CD4-positive, alpha-beta memory T cell (primary cell): ENCODE measurements at regions of chr1 and their contacts with region 1.

Region 1: GRCh38 chr1:206725109-206725963 is 40.6 kb downstream of the MAPKAPK2 start:
- DNase-seq: peak in 4 of 5 donors; percentile 47 to 60 (median 56)
- H3K4me3 ChIP-seq: no peak overlapping the region
- H3K4me3 Mint-ChIP-seq: peak overlapping the region in 2 of 8 donors; percentile 43 to 57
- H3K27ac ChIP-seq: no peak overlapping the region
- H3K27ac Mint-ChIP-seq: peak overlapping the region in 6 of 7 donors; percentile 60 to 90 (median 76)
- H3K4me1 ChIP-seq: peaks cover 32% of the 10 kb centered on the region
- H3K4me1 Mint-ChIP-seq: peaks cover 33 to 61% (median 46%) of the 10 kb centered on the region in 4 donors
- H3K27me3 ChIP-seq: no peaks in the 10 kb centered on the region
- H3K27me3 Mint-ChIP-seq: no peaks in the 10 kb centered on the region

Region 2: GRCh38 chr1:206469933-206470691 is 255.2 kb before region 1 on chr1 and contains the start of gene IKBKE:
- CTCF ChIA-PET with region 1: no interaction called
- POLR2A ChIA-PET with region 1: no interaction called
- intact Hi-C with region 1: no loop called
- DNase-seq: peak; percentile 44 to 69 (median 47)
- H3K4me3 ChIP-seq: peak within 1 kb of the TSS; percentile 99
- H3K4me3 Mint-ChIP-seq: peak within 1 kb of the TSS; percentile 84 to 97 (median 93)
- H3K27ac ChIP-seq: peak within 1 kb of the TSS; percentile 80
- H3K27ac Mint-ChIP-seq: peak within 1 kb of the TSS; percentile 64 to 95 (median 92)
- H3K4me1 ChIP-seq: peaks cover 86% of the 10 kb centered on the region
- H3K4me1 Mint-ChIP-seq: peaks cover 54 to 91% (median 79%) of the 10 kb centered on the region in 4 donors
- H3K27me3 ChIP-seq: no peaks in the 10 kb centered on the region
- H3K27me3 Mint-ChIP-seq: no peaks in the 10 kb centered on the region
- total RNA-seq, gene IKBKE: 81.8 to 92.3 TPM

Region 3: DNA sequence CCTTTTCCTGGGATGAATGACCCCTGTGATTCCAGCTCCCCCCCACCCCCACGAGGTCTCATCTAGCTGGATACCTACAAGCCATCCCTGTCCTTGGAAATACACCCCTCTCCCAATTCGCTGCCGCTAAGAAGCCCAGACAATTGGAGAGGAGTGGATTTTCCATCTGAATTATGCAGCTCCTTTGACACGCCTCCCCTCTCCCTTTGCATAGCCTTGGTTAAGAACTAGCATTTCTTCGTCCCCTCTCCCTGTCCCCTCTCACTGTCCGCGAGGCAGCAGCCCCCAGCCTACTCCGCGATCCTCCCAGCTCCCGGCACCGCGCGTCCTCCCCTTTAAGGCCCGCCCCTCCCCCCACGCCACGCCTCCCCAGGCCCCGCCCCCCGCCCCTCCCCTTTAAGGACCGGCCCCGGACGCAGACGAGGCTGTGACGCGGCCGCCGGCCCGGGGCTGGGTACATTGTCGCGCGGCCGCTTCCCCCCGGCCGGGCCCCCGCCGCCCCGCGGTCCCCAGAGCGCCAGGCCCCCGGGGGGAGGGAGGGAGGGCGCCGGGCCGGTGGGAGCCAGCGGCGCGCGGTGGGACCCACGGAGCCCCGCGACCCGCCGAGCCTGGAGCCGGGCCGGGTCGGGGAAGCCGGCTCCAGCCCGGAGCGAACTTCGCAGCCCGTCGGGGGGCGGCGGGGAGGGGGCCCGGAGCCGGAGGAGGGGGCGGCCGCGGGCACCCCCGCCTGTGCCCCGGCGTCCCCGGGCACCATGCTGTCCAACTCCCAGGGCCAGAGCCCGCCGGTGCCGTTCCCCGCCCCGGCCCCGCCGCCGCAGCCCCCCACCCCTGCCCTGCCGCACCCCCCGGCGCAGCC is 40.6 kb before region 1 on chr1 and contains the start of gene MAPKAPK2:
- CTCF ChIA-PET with region 1: interaction called, 29 read pairs
- POLR2A ChIA-PET with region 1: no interaction called
- intact Hi-C with region 1: loop called (anchors 1 kb)
- DNase-seq: peak; percentile 71 to 77 (median 73)
- H3K4me3 ChIP-seq: peak within 1 kb of the TSS; percentile 55 to 93
- H3K4me3 Mint-ChIP-seq: peak within 1 kb of the TSS; percentile 93 to 100 (median 96)
- H3K27ac ChIP-seq: peak within 1 kb of the TSS; percentile 90
- H3K27ac Mint-ChIP-seq: peak within 1 kb of the TSS; percentile 94 to 98 (median 97)
- H3K4me1 ChIP-seq: peaks cover 45% of the 10 kb centered on the region
- H3K4me1 Mint-ChIP-seq: peaks cover 26 to 52% (median 37%) of the 10 kb centered on the region in 4 donors
- H3K27me3 ChIP-seq: no peaks in the 10 kb centered on the region
- H3K27me3 Mint-ChIP-seq: peaks cover 2 to 3% of the 10 kb centered on the region in 2 donors
- total RNA-seq, gene MAPKAPK2: 71.7 to 72.8 TPM

Region 4: DNA sequence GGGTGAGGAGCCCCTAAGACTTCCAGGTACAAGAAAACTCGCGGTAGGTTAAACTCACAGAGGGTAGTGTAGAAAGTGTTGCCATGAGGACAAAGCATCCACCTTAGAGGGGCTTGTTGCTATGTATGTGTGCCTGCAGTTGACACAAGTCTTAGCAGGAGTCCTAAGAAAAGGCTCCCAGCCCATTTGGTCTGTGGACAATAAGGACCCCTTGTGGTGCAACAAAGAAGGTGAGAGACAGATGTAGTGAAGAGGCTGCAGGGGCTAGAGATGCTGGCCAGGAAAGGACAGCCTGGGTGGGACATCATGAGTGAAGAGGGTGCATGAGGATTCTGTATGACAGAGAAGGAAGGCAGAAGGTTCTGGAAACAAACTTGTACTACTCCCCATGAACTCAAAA is 83.3 kb after region 1 on chr1:
- CTCF ChIA-PET with region 1: interaction called, 351 read pairs
- POLR2A ChIA-PET with region 1: interaction called, 3 read pairs
- intact Hi-C with region 1: loop called (anchors 1 kb)
- DNase-seq: peak; percentile 61 to 68 (median 63)
- H3K4me3 ChIP-seq: no peak overlapping the region
- H3K4me3 Mint-ChIP-seq: no peak overlapping the region
- H3K27ac ChIP-seq: no peak overlapping the region
- H3K27ac Mint-ChIP-seq: peak overlapping the region in 6 of 7 donors; percentile 20 to 90 (median 83)
- H3K4me1 ChIP-seq: peaks cover 35% of the 10 kb centered on the region
- H3K4me1 Mint-ChIP-seq: peaks cover 24 to 56% (median 43%) of the 10 kb centered on the region in 4 donors
- H3K27me3 ChIP-seq: no peaks in the 10 kb centered on the region
- H3K27me3 Mint-ChIP-seq: no peaks in the 10 kb centered on the region

Region 5: DNA sequence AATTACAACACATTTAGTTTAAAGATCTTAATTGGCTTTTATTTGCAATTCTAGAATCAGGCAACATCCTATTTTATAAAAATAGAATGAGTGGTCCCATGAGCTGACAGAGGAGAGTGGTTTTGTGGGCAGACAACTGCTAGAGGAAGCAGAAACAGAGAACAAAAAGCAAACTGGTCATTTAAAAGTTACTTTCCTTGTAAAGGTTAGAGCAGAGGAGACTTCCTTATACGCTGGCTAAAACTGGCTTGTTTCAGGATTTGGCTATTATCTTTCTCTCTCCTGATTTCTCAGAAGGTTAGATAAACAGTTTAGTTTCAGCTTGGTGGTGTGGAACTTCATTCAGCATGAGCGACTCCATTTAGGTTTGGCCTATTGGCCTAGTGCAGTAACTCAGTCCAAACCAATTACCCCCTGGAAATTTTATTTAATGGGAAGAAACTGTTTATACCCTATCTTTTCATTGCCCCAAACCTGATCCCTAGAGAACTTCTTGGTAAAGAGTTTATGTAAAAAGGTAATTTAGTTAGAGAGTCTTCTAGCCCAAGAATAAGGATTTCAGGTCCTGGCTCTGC is 107.9 kb after region 1 on chr1:
- CTCF ChIA-PET with region 1: interaction called, 10 read pairs
- POLR2A ChIA-PET with region 1: no interaction called
- intact Hi-C with region 1: no loop called
- DNase-seq: no peak
- H3K4me3 ChIP-seq: no peak overlapping the region
- H3K4me3 Mint-ChIP-seq: no peak overlapping the region
- H3K27ac ChIP-seq: no peak overlapping the region
- H3K27ac Mint-ChIP-seq: no peak overlapping the region
- H3K4me1 ChIP-seq: peaks cover 21% of the 10 kb centered on the region
- H3K4me1 Mint-ChIP-seq: peaks cover 12 to 37% (median 16%) of the 10 kb centered on the region in 4 donors
- H3K27me3 ChIP-seq: no peaks in the 10 kb centered on the region
- H3K27me3 Mint-ChIP-seq: peaks cover 5 to 9% of the 10 kb centered on the region in 2 donors

Region 6: GRCh38 chr1:206905280-206906164 is 180.2 kb after region 1 on chr1:
- CTCF ChIA-PET with region 1: interaction called, 17 read pairs
- POLR2A ChIA-PET with region 1: interaction called, 12 read pairs
- intact Hi-C with region 1: no loop called
- DNase-seq: no peak
- H3K4me3 ChIP-seq: no peak overlapping the region
- H3K4me3 Mint-ChIP-seq: peak overlapping the region; percentile 49 to 80 (median 69)
- H3K27ac ChIP-seq: peak overlapping the region; percentile 31
- H3K27ac Mint-ChIP-seq: peak overlapping the region; percentile 67 to 95 (median 85)
- H3K4me1 ChIP-seq: peaks cover 60% of the 10 kb centered on the region
- H3K4me1 Mint-ChIP-seq: peaks cover 45 to 78% (median 60%) of the 10 kb centered on the region in 4 donors
- H3K27me3 ChIP-seq: no peaks in the 10 kb centered on the region
- H3K27me3 Mint-ChIP-seq: no peaks in the 10 kb centered on the region

Region 7: GRCh38 chr1:206982216-206982615 is 256.9 kb after region 1 on chr1:
- CTCF ChIA-PET with region 1: interaction called, 40 read pairs
- POLR2A ChIA-PET with region 1: interaction called, 3 read pairs
- intact Hi-C with region 1: loop called (anchors 1 kb)
- DNase-seq: peak; percentile 50 to 60 (median 53)
- H3K4me3 ChIP-seq: no peak overlapping the region
- H3K4me3 Mint-ChIP-seq: no peak overlapping the region
- H3K27ac ChIP-seq: no peak overlapping the region
- H3K27ac Mint-ChIP-seq: no peak overlapping the region
- H3K4me1 ChIP-seq: no peaks in the 10 kb centered on the region
- H3K4me1 Mint-ChIP-seq: no peaks in the 10 kb centered on the region
- H3K27me3 ChIP-seq: no peaks in the 10 kb centered on the region
- H3K27me3 Mint-ChIP-seq: peaks cover 12 to 17% of the 10 kb centered on the region in 2 donors